Calu3 (cell line): ENCODE measurements at regions of chr4 and their contacts with region 1.

Region 1: DNA sequence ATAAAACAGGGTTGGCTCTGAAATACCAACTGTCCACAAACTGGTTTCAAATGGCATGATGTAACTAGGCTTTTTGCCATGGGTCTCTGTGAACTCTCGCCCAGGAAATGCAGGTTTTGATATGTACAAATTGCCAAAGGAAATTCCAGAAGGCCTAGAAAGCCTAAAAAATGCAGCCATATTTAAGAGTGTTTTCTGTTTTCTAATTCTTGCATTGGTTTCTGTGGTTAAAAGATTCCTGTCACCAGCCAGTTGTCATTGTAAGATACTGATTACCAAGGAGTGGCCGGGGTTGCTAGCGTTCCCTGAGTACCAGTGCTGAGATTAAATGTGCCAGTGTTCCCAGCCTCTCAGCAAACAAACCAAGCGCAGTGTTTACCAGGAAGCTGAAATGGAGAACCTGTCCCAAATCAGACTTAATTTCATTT is 53.9 kb upstream of the SORBS2 start:
- DNase-seq: peak; percentile 52
- H3K4me3 Mint-ChIP-seq: no peak overlapping the region
- H3K27ac Mint-ChIP-seq: peak overlapping the region; percentile 69
- H3K4me1 Mint-ChIP-seq: peaks cover 54% of the 10 kb centered on the region
- H3K27me3 Mint-ChIP-seq: no peaks in the 10 kb centered on the region
- CTCF ChIP-seq: no peak

Region 2: GRCh38 chr4:185242749-185243533 is 623.0 kb before region 1 on chr4:
- CTCF ChIA-PET with region 1: no interaction called
- intact Hi-C with region 1: no loop called
- DNase-seq: no peak
- H3K4me3 Mint-ChIP-seq: no peak overlapping the region
- H3K27ac Mint-ChIP-seq: no peak overlapping the region
- H3K4me1 Mint-ChIP-seq: peaks cover 22% of the 10 kb centered on the region
- H3K27me3 Mint-ChIP-seq: no peaks in the 10 kb centered on the region
- CTCF ChIP-seq: no peak

Region 3: GRCh38 chr4:185833055-185833598 is 32.8 kb before region 1 on chr4:
- CTCF ChIA-PET with region 1: interaction called, 3 read pairs
- intact Hi-C with region 1: loop called (anchors 5 kb)
- DNase-seq: peak; percentile 35
- H3K4me3 Mint-ChIP-seq: no peak overlapping the region
- H3K27ac Mint-ChIP-seq: no peak overlapping the region
- H3K4me1 Mint-ChIP-seq: peaks cover 22% of the 10 kb centered on the region
- H3K27me3 Mint-ChIP-seq: no peaks in the 10 kb centered on the region
- CTCF ChIP-seq: no peak